ENCODE measurements at regions of chr17 and their contacts with region 1.

Region 1: GRCh38 chr17:50560185-50560824 is at the start of gene CACNA1G:
- DNase-seq: peak; percentile 89 to 92
- ATAC-seq: peak; percentile 87 to 95 (median 92)
- H3K4me3 ChIP-seq: peak within 1 kb of the TSS; percentile 36 to 66 (median 56)
- H3K27ac ChIP-seq: no peak within 1 kb of the TSS
- H3K4me1 ChIP-seq: peaks cover 13 to 59% (median 39%) of the 10 kb centered on the region in 9 donors
- H3K27me3 ChIP-seq: peaks cover 17 to 89% (median 60%) of the 10 kb centered on the region in 7 donors
- CTCF ChIP-seq: peak in 2 of 9 donors; percentile 19 to 20
- total RNA-seq, gene CACNA1G: 0.14 to 0.46 (median 0.27) TPM

Region 2: GRCh38 chr17:50604513-50604912 is 44.2 kb after region 1 on chr17:
- intact Hi-C with region 1: loop called in 3 of 10 experiments (anchors 5 kb)
- DNase-seq: peak; percentile 80 to 82
- ATAC-seq: peak; percentile 79 to 96 (median 90)
- H3K4me3 ChIP-seq: peak overlapping the region in 2 of 10 donors; percentile 6 to 10
- H3K27ac ChIP-seq: peak overlapping the region in 3 of 10 donors; percentile 6 to 26 (median 23)
- H3K4me1 ChIP-seq: peaks cover 9 to 30% (median 22%) of the 10 kb centered on the region in 9 donors
- H3K27me3 ChIP-seq: peaks cover 0 to 22% (median 7%) of the 10 kb centered on the region in 7 donors
- CTCF ChIP-seq: no peak

Region 3: GRCh38 chr17:50618300-50618699 is 58.0 kb after region 1 on chr17:
- intact Hi-C with region 1: no loop called
- DNase-seq: no peak
- ATAC-seq: no peak
- H3K4me3 ChIP-seq: no peak overlapping the region
- H3K27ac ChIP-seq: no peak overlapping the region
- H3K4me1 ChIP-seq: peaks cover 0 to 27% (median 0%) of the 10 kb centered on the region in 9 donors
- H3K27me3 ChIP-seq: peaks cover 0 to 20% (median 6%) of the 10 kb centered on the region in 7 donors
- CTCF ChIP-seq: no peak

Measured in heart right ventricle (tissue), 16 donors.